ENCODE measurements at regions of chr22 and their contacts with region 1.

Region 1: GRCh38 chr22:31715147-31715778 is 34.7 kb downstream of the PRR14L start:
- DNase-seq: no peak
- ATAC-seq: no peak
- H3K4me3 ChIP-seq: no peak overlapping the region
- H3K27ac ChIP-seq: no peak overlapping the region
- H3K4me1 ChIP-seq: no peaks in the 10 kb centered on the region
- H3K27me3 ChIP-seq: no peaks in the 10 kb centered on the region
- CTCF ChIP-seq: no peak

Region 2: DNA sequence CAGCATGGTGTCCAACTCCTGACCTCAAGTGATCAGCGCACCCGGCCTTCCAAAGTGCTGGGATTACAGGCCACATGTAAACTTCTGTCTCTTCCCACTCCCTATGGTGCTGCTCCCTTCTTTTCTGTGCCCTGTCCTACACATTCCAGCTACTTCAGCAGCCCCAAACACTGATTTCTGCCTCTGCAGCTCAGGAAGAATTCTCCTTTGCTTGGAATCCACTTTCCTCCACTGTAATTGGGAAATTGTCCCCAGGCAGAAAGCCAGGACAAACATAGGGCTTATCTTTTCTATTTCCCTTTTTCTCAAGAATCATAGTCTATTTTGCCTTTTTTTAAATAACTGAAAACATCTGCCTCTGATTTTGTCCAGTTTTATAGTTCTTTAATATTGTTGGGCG is 337.1 kb before region 1 on chr22:
- CTCF ChIA-PET with region 1: no interaction called
- POLR2A ChIA-PET with region 1: no interaction called
- in situ Hi-C with region 1: no loop called
- intact Hi-C with region 1: no loop called
- DNase-seq: no peak
- ATAC-seq: no peak
- H3K4me3 ChIP-seq: no peak overlapping the region
- H3K27ac ChIP-seq: no peak overlapping the region
- H3K4me1 ChIP-seq: no peaks in the 10 kb centered on the region
- H3K27me3 ChIP-seq: no peaks in the 10 kb centered on the region
- CTCF ChIP-seq: no peak

Region 3: DNA sequence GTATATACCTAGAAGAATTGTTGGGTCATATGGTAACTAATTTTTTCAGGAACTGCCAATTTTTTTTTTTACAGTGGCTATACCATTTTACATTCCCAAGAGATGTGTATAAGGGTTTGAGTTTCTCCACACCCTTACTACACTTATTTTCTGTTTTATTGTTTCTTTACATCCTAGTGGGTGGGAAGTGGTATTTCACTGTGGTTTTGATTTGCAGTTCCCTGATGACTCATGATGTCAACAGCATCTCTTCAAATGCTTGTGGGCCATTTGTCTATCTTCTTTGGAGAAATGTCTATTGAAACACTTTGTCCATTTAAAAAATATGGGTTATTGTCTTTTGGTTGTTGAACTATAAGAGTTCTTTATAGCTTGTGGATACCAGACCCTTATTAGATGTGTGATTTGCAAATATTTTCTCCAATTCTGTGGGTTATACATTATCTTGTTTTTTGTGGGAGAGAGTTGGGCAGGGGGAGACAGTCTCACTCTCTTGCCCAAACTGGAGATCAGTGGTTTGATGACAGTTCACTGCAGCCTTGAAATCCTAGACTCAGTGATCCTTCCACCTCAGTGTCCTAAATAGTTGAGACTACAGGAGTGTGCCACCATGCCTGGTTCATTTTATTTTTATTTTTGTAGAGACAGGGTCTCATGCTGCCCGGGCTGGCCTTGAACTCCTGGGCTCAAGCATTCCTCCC is 22.9 kb before region 1 on chr22:
- CTCF ChIA-PET with region 1: no interaction called
- POLR2A ChIA-PET with region 1: interaction called, 11 read pairs
- in situ Hi-C with region 1: no loop called
- intact Hi-C with region 1: no loop called
- DNase-seq: no peak
- ATAC-seq: no peak
- H3K4me3 ChIP-seq: no peak overlapping the region
- H3K27ac ChIP-seq: no peak overlapping the region
- H3K4me1 ChIP-seq: no peaks in the 10 kb centered on the region
- H3K27me3 ChIP-seq: no peaks in the 10 kb centered on the region
- CTCF ChIP-seq: no peak

Region 4: DNA sequence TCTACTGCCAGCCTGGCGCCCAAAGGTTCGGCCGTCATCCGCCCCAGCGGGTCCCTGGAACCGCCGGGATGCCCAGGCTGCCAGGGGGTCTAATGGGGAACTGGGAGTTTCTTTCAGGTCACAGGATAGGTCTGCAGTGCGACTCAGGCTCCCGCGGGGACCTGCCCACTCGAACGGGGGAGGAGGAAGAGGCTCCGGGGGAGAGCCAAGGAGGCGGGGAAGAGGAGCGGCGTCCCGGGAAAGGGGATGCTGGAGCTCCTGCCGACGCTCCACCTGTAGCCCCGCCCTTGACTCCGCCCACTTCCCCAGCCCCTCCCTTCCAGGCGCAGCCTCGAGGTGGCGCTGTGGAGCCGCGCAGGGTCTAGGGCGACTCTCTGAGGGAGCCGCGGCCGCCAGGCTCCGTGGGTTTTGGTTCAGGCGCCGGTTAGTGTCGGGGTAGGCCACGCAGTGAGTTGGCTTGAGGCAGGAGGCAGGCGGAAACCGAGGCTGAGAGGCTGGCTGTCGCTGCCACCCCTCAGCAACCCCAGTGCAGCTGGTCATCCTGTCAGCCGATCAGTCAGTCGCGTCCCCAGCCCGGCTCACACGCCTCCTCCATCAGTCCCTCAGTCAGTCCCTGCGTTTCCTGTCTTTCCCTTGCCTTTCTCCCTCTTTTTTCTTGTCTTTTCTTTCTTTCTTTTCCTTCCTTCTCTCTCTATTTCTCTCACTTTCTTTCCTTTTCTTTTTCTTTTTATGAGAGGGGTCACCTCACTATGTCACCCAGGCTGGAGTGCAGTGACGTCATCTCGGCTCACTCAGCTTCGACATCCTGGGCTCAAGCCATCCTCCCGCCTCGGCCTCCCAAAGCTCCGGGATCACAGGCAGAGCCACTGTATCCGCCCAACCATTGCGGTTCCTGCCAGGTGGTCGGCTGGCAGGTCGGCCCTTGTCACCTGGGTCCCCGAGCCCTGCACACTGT is 255.5 kb after region 1 on chr22:
- CTCF ChIA-PET with region 1: no interaction called
- POLR2A ChIA-PET with region 1: no interaction called
- in situ Hi-C with region 1: loop called (anchors 25 kb)
- intact Hi-C with region 1: no loop called
- DNase-seq: peak; percentile 36
- ATAC-seq: peak; percentile 92
- H3K4me3 ChIP-seq: peak overlapping the region; percentile 49 to 67
- H3K27ac ChIP-seq: no peak overlapping the region
- H3K4me1 ChIP-seq: 0 out of 2 replicates have a peak, but pooled peaks cover 2% of the 10 kb centered on the region
- H3K27me3 ChIP-seq: no peaks in the 10 kb centered on the region
- CTCF ChIP-seq: peak; percentile 95